Esophagus squamous epithelium (tissue), 5 donors: ENCODE measurements at regions of chr4 and their contacts with region 1.

Region 1: DNA sequence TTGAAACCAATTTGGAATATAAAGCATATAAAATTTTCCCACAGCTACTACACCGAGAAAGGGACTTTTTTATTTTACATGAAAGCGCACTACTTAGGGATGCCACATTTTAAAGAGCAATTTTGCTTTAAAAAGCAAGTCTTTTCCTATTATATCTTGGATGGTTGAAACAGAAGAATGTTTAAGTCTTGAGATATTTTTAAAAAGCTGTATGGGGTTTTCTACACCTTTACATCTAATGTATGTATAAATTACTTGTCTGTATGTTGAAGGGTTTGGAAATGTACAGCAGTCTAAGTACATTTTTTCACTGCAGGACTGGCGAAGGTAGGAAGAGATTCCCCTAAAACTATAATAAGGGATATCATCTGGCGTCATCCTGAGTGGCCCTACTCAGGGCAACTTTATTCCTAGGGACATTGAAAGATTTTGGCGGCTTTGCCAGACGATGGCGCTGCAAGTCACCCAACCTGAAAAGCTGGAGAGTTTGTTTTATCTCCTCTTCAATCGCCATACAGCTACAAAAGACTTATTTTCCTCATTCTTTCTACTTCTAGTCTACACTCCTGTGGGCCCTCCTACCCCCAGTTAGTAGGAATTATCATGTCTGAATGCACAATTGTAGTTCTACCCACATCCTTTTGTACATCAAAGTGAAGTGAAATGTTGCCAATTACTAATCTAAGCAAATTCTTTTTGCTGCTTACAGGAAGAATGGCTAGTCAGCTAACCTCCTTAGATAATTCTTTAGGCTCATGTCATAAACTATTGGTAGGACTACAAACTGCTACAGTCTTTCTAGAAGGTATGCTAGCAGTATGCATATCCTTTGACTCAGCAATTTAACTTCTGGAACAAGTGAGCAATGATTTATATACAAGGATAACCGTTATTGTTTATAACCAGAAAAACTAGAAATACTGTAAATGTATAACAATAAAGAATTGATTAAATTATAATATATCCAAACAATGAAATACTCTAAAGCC is 782 bp upstream of the NEK1 start:
- DNase-seq: no peak
- H3K4me3 ChIP-seq: peak overlapping the region; percentile 77 to 94 (median 80)
- H3K27ac ChIP-seq: peak overlapping the region; percentile 96 to 99 (median 98)
- H3K4me1 ChIP-seq: peaks cover 0 to 40% (median 10%) of the 10 kb centered on the region in 3 donors
- H3K27me3 ChIP-seq: no peaks in the 10 kb centered on the region
- CTCF ChIP-seq: peak; percentile 19 to 76 (median 62)
- POLR2A ChIP-seq: no peak

Region 2: GRCh38 chr4:168942985-168943384 is 670.2 kb before region 1 on chr4:
- intact Hi-C with region 1: no loop called
- DNase-seq: no peak
- H3K4me3 ChIP-seq: no peak overlapping the region
- H3K27ac ChIP-seq: no peak overlapping the region
- H3K4me1 ChIP-seq: no peaks in the 10 kb centered on the region
- H3K27me3 ChIP-seq: no peaks in the 10 kb centered on the region
- CTCF ChIP-seq: peak in 4 of 6 experiments; percentile 12 to 44 (median 27)
- POLR2A ChIP-seq: no peak

Region 3: DNA sequence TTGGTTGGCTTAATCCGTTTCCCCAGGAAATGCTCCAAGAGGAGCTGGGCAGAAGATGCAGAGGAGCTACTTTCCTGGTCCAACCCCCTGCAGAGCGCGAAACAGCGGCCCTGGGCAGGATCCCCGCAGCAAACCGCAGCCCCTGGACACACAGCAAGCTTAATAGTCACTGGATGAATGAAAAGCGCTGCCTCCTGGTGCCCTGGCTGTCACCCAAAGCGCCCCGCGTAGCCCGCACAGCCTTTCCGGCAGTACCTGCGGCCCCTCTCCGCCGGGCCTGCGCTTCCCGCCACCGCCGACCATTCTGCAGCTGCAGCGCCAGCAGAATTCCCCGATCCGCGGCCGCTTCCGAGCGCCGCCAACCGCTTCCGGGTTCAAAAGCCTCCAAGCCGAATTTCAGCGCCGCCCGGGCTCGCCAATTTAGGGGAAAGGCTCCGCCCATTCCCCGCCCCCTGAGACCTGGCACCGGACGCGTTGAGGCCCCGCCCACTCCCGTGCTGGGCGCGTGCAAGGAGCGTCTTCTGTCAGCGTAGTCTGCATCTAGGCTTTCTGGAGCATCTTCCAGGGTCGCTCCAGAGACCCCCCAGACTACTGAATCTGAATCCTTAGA is 144.5 kb after region 1 on chr4 and contains the start of gene HPF1:
- intact Hi-C with region 1: loop called (anchors 5 kb)
- DNase-seq: peak; percentile 59
- H3K4me3 ChIP-seq: peak within 1 kb of the TSS; percentile 58 to 92 (median 73)
- H3K27ac ChIP-seq: peak within 1 kb of the TSS; percentile 49 to 81 (median 73)
- H3K4me1 ChIP-seq: peaks cover 6 to 27% (median 13%) of the 10 kb centered on the region in 3 donors
- H3K27me3 ChIP-seq: no peaks in the 10 kb centered on the region
- CTCF ChIP-seq: no peak
- POLR2A ChIP-seq: peak in 2 of 4 donors; percentile 38 to 52
- total RNA-seq, gene HPF1: 11.1 to 40.9 (median 17.1) TPM